ENCODE measurements at regions of chr4 and their contacts with region 1.

Region 1: GRCh38 chr4:81471588-81472288 is at the start of gene RASGEF1B:
- DNase-seq: peak; percentile 83 to 99 (median 88)

Region 2: GRCh38 chr4:81427344-81427821 is 44.4 kb before region 1 on chr4:
- intact Hi-C with region 1: loop called (anchors 5 kb)
- DNase-seq: peak in 1 of 10 donors; percentile 73

Region 3: GRCh38 chr4:81565142-81565870 is 93.6 kb after region 1 on chr4:
- intact Hi-C with region 1: loop called (anchors 5 kb)
- DNase-seq: peak; percentile 60 to 95 (median 78)

Region 4: DNA sequence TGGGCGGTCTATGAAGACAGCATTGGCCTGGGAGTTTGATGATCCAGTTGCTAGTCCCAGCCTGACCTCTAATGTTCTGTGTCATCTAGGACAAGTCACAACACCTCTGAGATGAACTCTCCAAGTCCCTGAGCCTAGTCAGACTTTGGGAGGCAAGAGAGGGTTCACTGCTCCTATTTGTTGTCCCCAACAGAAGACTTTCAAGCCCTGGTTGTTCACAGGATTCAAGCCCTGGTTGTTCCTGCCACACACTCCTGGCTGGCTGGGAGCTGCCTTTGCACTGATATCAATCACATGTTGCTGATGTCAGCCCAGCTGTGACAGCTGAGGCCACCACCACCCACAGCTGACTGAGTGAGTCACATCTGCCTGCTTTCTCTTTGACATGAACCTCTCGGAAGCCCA is 253.2 kb after region 1 on chr4:
- intact Hi-C with region 1: loop called (anchors 10 kb)
- DNase-seq: peak in 9 of 10 donors; percentile 35 to 94 (median 55)

Region 5: DNA sequence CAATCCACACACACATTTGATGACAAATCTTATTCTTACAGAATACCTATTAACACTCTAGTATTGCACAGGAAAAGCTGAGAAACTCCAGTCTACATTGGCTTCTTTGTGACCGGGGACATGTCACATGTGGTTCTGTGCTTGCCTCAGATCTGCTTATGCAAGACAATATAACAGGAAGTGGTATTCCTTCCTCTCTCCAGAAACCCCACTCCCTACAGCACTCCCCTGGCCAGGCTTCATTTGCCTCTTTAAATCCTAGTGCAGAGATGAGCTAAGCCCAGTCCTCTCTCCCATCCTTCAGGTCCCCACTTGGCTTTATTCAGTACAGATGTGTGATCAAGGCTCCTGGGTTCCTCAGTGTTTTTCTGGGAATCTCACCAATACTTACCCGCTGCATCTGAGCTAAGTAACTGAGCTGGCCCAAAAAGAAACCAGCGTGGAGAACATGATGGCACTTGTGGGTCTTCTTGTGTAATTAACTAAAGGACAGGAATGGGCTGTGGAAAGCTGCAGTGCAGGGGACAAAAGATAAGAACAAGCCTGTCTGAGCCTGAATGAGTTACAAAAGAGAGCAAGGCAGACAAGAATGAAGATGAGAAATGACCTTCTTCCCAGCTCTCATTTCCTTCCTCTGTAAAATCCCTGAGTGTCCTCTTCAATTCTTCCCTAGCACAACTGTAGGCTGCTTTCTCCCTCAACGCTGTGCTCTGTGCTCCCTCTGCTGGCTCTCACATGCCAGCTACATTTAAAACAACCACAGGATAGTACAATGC is 796.5 kb after region 1 on chr4:
- intact Hi-C with region 1: loop called (anchors 5 kb)
- DNase-seq: peak; percentile 34 to 88 (median 63)